Endothelial cell of umbilical vein (primary cell): ENCODE measurements at regions of chr10 and their contacts with region 1.

Region 1: DNA sequence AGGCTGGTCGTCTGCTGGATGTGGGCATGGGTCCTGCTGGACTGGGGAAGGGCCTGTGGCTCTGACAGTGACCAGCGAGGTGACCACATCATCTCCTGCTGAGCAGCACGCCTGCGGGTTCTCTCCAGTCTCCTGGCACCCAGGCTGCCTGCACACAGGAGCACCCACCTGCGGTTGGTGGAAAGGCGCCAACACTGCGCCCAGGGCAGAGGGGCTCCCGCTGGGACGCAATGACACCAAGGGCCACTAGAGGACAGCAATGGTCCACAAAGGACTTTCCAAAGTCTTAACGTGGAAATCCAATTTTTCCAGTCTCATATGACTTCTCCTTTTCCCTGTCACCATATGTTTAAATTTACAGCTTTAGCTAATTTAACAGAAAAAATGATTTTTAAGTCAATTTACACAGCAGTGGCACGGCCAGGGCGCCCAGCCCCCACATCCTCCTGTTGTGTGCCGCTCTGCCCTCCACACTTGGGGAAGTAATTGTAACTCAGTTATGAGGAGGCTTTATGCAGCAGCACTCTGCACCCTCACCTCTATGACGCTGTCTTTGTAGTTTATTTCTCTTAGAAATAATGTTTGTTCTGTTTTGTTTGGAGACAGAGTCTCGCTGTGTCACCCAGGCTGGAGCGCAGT is 38.1 kb downstream of the CFAP46 start:
- DNase-seq: peak; percentile 33
- H3K4me3 ChIP-seq: no peak overlapping the region
- H3K27ac ChIP-seq: no peak overlapping the region
- H3K4me1 ChIP-seq: no peaks in the 10 kb centered on the region
- H3K27me3 ChIP-seq: no peaks in the 10 kb centered on the region
- CTCF ChIP-seq: peak; percentile 76 to 81
- POLR2A ChIP-seq: no peak

Region 2: GRCh38 chr10:132836832-132837540 is 67.3 kb before region 1 on chr10:
- CTCF ChIA-PET with region 1: no interaction called
- POLR2A ChIA-PET with region 1: no interaction called
- dilution Hi-C with region 1: no loop called
- intact Hi-C with region 1: loop called (anchors 2 kb)
- DNase-seq: peak; percentile 18
- H3K4me3 ChIP-seq: no peak overlapping the region
- H3K27ac ChIP-seq: no peak overlapping the region
- H3K4me1 ChIP-seq: no peaks in the 10 kb centered on the region
- H3K27me3 ChIP-seq: no peaks in the 10 kb centered on the region
- CTCF ChIP-seq: peak; percentile 78 to 88
- POLR2A ChIP-seq: no peak

Region 3: DNA sequence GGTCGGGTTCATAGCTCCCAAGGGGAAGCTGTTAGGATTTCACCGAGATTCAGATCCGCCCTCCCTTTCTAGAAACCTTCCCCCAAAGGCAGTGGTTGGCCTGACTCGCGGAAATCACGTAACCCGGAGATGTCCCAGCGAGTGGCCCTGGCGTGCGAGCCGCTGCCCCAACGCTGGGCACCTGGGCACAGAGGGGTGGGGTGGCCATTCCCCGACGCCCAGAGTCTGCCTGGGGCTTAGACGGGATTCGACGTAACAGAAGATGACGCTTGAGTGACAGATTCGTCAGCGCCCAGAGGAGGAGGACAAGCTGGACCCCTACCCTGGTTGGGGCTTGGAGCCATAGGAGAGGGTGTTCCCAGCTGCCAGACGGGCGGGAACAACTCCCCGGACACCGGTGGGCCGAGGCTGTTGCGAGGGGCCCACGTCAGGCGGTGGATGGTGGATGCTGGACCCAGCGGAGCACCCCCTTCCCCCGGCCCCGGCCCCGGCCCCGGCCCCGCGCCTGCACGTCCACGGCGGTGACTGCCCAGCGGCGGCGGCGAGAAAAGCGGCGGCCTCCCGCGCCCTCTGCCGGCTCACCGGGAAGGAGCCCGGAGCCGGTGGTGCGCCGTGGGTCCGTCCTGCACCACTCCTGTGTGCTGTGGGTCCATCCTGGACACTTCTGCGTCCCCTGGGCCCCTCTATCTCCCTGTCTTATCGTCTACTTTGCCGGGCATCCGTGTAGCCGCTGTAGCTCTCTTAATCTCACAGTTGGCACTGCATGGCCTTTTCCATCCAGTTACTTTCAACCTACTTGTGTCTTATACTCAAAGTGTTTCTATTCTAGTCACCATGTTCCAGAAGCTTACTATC is 220.3 kb after region 1 on chr10:
- CTCF ChIA-PET with region 1: no interaction called
- POLR2A ChIA-PET with region 1: no interaction called
- dilution Hi-C with region 1: no loop called
- intact Hi-C with region 1: loop called (anchors 1 kb)
- DNase-seq: peak; percentile 9
- H3K4me3 ChIP-seq: no peak overlapping the region
- H3K27ac ChIP-seq: no peak overlapping the region
- H3K4me1 ChIP-seq: no peaks in the 10 kb centered on the region
- H3K27me3 ChIP-seq: no peaks in the 10 kb centered on the region
- CTCF ChIP-seq: peak; percentile 19 to 65
- POLR2A ChIP-seq: no peak

Region 4: DNA sequence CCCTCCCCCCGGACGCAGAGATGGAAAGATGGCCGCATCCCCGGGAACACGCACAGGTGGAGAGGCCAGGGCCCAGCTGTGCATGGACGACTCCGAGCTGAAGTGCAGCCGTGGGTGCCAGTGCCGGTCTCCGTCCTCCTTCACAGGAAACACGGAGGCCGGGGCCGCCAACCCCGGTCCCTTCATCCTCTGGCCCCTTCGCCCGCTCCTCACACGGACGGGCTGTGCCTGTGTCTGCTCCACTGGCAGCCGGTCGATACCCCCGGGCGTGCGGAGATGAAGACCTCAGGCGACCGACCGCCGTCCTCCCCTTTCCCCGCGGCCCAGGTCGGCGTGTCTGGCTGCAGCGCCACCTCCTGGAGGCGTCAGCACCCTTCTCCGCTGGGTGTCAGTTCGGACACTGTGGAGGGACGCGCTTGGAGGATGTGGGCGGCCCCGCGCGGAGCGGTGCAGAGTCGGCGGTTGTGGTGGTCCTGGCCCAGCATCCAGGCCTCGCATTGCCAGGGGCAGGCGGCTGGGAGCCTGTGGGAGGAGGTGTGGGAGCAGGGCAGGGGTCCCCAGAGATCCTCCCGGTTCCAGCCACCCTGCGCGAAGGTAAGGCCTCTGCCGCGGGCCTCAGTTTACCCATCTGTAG is 414.3 kb after region 1 on chr10:
- CTCF ChIA-PET with region 1: no interaction called
- POLR2A ChIA-PET with region 1: no interaction called
- dilution Hi-C with region 1: no loop called
- intact Hi-C with region 1: loop called (anchors 5 kb)
- DNase-seq: peak; percentile 59
- H3K4me3 ChIP-seq: peak overlapping the region in 1 of 3 experiments; percentile 26
- H3K27ac ChIP-seq: no peak overlapping the region
- H3K4me1 ChIP-seq: no peaks in the 10 kb centered on the region
- H3K27me3 ChIP-seq: peaks cover 0 to 3% of the 10 kb centered on the region in 2 experiments
- CTCF ChIP-seq: peak; percentile 91
- POLR2A ChIP-seq: no peak